Activated B cell treated with CpG ODN at 0.5 μM for 24 hours (primary cell): ENCODE measurements at regions of chr21 and their contacts with region 1.

Region 1: GRCh38 chr21:25607151-25608043 is at the start of gene MRPL39:
- DNase-seq: peak; percentile 85
- ATAC-seq: peak; percentile 89
- H3K4me3 Mint-ChIP-seq: peak within 1 kb of the TSS; percentile 100
- H3K27ac Mint-ChIP-seq: peak within 1 kb of the TSS; percentile 99
- H3K4me1 Mint-ChIP-seq: peaks cover 35% of the 10 kb centered on the region
- H3K27me3 Mint-ChIP-seq: no peaks in the 10 kb centered on the region
- CTCF ChIP-seq: no peak
- total RNA-seq, gene MRPL39: 43.6 and 46.3 TPM in 2 replicates

Region 2: DNA sequence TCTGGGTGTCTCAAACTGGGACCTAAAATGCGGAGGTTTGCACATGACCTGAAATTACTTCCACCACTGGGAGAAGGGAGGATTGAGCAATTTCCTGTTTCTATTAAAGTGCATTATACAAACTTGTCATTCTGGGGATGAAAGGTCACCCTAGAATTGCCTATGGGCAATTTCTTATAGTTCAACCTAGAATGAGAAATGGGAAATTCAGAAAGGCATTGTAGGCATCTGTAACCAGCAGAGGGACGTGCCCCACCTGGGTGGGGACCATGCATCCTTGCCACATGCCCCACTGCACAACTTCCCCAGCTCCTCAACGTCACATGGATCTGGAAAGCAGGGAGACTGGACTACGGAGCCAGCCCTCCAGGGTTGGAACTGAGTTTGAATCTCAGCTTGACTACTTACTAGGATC is 47.1 kb before region 1 on chr21:
- CTCF ChIA-PET with region 1: no interaction called
- POLR2A ChIA-PET with region 1: no interaction called
- intact Hi-C with region 1: no loop called
- DNase-seq: no peak
- ATAC-seq: no peak
- H3K4me3 Mint-ChIP-seq: peak overlapping the region; percentile 92
- H3K27ac Mint-ChIP-seq: no peak overlapping the region
- H3K4me1 Mint-ChIP-seq: peaks cover 45% of the 10 kb centered on the region
- H3K27me3 Mint-ChIP-seq: no peaks in the 10 kb centered on the region
- CTCF ChIP-seq: no peak

Region 3: DNA sequence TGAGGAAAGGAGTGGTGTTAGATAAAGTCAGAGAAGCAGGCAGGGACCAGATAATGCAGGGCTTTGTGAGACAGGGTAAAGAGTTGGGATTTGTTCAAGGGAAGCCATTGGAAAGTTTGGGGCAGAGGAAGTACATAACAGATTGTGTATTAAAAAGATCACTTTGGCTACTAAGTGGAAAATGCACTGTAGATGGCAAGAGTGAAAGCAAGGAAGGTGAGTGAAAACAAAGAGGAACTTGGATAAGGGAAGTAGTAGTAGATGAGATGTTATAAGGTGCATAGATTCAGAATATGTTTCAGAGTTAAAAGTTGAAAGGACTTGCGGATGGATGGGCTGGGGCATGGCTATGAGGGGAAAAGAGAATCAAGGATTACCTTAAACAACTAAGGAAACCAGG is 17.5 kb before region 1 on chr21:
- CTCF ChIA-PET with region 1: interaction called, 3 read pairs
- POLR2A ChIA-PET with region 1: no interaction called
- intact Hi-C with region 1: loop called (anchors 2 kb)
- DNase-seq: no peak
- ATAC-seq: no peak
- H3K4me3 Mint-ChIP-seq: no peak overlapping the region
- H3K27ac Mint-ChIP-seq: peak overlapping the region; percentile 47
- H3K4me1 Mint-ChIP-seq: peaks cover 15% of the 10 kb centered on the region
- H3K27me3 Mint-ChIP-seq: no peaks in the 10 kb centered on the region
- CTCF ChIP-seq: no peak

Region 4: DNA sequence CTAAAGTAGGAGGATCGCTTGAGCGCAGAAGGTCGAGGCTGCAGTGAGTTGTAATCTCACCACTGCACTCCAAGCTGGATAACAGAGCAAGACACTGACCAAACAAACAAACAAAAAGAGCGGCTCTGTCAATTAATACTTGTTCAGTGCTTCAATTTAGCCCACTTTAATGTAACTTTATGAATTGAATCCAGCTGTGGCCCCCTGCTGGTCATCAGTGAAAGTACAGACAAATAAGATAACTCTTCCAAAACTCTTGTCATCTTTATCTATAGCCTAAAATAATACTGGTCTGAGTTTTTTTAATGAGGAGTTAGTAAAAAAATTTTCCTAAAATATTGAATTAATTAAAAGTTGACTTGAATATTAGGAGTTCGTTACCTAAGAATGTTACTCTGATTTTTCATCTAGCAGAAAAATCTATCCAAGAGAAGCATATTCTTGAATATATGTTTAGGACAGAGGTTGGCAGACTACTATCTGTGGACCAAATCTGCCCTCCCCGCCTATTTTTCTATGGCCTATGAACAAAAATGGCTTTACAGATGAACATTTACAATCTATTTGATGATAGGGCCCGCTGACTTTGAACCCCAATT is 101.2 kb after region 1 on chr21:
- CTCF ChIA-PET with region 1: interaction called, 27 read pairs
- POLR2A ChIA-PET with region 1: no interaction called
- intact Hi-C with region 1: loop called (anchors 1 kb)
- DNase-seq: no peak
- ATAC-seq: peak; percentile 34
- H3K4me3 Mint-ChIP-seq: no peak overlapping the region
- H3K27ac Mint-ChIP-seq: no peak overlapping the region
- H3K4me1 Mint-ChIP-seq: no peaks in the 10 kb centered on the region
- H3K27me3 Mint-ChIP-seq: no peaks in the 10 kb centered on the region
- CTCF ChIP-seq: peak; percentile 94

Region 5: GRCh38 chr21:25862596-25862995 is 255.2 kb after region 1 on chr21:
- CTCF ChIA-PET with region 1: interaction called, 9 read pairs
- POLR2A ChIA-PET with region 1: no interaction called
- intact Hi-C with region 1: loop called (anchors 1 kb)
- DNase-seq: no peak
- ATAC-seq: peak; percentile 45
- H3K4me3 Mint-ChIP-seq: no peak overlapping the region
- H3K27ac Mint-ChIP-seq: no peak overlapping the region
- H3K4me1 Mint-ChIP-seq: no peaks in the 10 kb centered on the region
- H3K27me3 Mint-ChIP-seq: no peaks in the 10 kb centered on the region
- CTCF ChIP-seq: peak; percentile 62

Region 6: GRCh38 chr21:25967573-25968438 is 360.4 kb after region 1 on chr21:
- CTCF ChIA-PET with region 1: no interaction called
- POLR2A ChIA-PET with region 1: no interaction called
- intact Hi-C with region 1: loop called (anchors 5 kb)
- DNase-seq: no peak
- ATAC-seq: peak; percentile 95
- H3K4me3 Mint-ChIP-seq: peak overlapping the region; percentile 24
- H3K27ac Mint-ChIP-seq: peak overlapping the region; percentile 93
- H3K4me1 Mint-ChIP-seq: peaks cover 32% of the 10 kb centered on the region
- H3K27me3 Mint-ChIP-seq: no peaks in the 10 kb centered on the region
- CTCF ChIP-seq: no peak

Region 7: GRCh38 chr21:26099610-26100219 is 492.3 kb after region 1 on chr21:
- CTCF ChIA-PET with region 1: no interaction called
- POLR2A ChIA-PET with region 1: no interaction called
- intact Hi-C with region 1: no loop called
- DNase-seq: no peak
- ATAC-seq: no peak
- H3K4me3 Mint-ChIP-seq: no peak overlapping the region
- H3K27ac Mint-ChIP-seq: no peak overlapping the region
- H3K4me1 Mint-ChIP-seq: no peaks in the 10 kb centered on the region
- H3K27me3 Mint-ChIP-seq: no peaks in the 10 kb centered on the region
- CTCF ChIP-seq: no peak